A673 (cell line): ENCODE measurements at regions of chr20 and their contacts with region 1.

Region 1: GRCh38 chr20:3101737-3102574 is 17.4 kb upstream of the AVP start:
- DNase-seq: no peak
- H3K4me3 ChIP-seq: no peak overlapping the region
- H3K27ac ChIP-seq: no peak overlapping the region
- H3K4me1 ChIP-seq: no peaks in the 10 kb centered on the region
- H3K27me3 ChIP-seq: no peaks in the 10 kb centered on the region
- CTCF ChIP-seq: no peak

Region 2: DNA sequence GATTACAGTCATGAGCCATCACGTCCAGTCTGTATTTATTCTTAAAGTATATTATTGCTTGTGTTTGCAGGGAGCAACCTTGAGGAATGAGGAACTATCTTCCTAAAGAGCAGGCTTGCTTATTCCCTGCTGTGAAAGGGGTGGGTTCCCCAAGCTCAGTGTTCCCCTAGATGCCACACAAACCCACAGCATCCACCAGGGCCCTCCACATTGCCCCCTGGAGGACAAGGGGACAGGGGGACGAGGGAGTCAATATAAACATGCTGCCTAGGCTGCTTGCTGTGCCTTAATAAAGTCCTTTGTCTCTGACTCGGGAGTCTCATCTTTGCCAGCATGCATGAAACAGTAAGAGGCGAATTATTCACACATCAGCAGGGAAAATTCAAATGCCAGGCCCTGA is 430.0 kb before region 1 on chr20:
- CTCF ChIA-PET with region 1: no interaction called
- POLR2A ChIA-PET with region 1: no interaction called
- intact Hi-C with region 1: no loop called
- DNase-seq: peak; percentile 48
- H3K4me3 ChIP-seq: no peak overlapping the region
- H3K27ac ChIP-seq: no peak overlapping the region
- H3K4me1 ChIP-seq: no peaks in the 10 kb centered on the region
- H3K27me3 ChIP-seq: no peaks in the 10 kb centered on the region
- CTCF ChIP-seq: peak; percentile 46

Region 3: GRCh38 chr20:2713285-2713684 is 388.7 kb before region 1 on chr20:
- CTCF ChIA-PET with region 1: no interaction called
- POLR2A ChIA-PET with region 1: no interaction called
- intact Hi-C with region 1: no loop called
- DNase-seq: peak; percentile 38
- H3K4me3 ChIP-seq: no peak overlapping the region
- H3K27ac ChIP-seq: no peak overlapping the region
- H3K4me1 ChIP-seq: no peaks in the 10 kb centered on the region
- H3K27me3 ChIP-seq: peaks cover 38% of the 10 kb centered on the region
- CTCF ChIP-seq: peak; percentile 59

Region 4: GRCh38 chr20:2984028-2984501 is 117.9 kb before region 1 on chr20:
- CTCF ChIA-PET with region 1: no interaction called
- POLR2A ChIA-PET with region 1: interaction called, 10 read pairs
- intact Hi-C with region 1: no loop called
- DNase-seq: no peak
- H3K4me3 ChIP-seq: no peak overlapping the region
- H3K27ac ChIP-seq: no peak overlapping the region
- H3K4me1 ChIP-seq: peaks cover 10% of the 10 kb centered on the region
- H3K27me3 ChIP-seq: no peaks in the 10 kb centered on the region
- CTCF ChIP-seq: no peak

Region 5: DNA sequence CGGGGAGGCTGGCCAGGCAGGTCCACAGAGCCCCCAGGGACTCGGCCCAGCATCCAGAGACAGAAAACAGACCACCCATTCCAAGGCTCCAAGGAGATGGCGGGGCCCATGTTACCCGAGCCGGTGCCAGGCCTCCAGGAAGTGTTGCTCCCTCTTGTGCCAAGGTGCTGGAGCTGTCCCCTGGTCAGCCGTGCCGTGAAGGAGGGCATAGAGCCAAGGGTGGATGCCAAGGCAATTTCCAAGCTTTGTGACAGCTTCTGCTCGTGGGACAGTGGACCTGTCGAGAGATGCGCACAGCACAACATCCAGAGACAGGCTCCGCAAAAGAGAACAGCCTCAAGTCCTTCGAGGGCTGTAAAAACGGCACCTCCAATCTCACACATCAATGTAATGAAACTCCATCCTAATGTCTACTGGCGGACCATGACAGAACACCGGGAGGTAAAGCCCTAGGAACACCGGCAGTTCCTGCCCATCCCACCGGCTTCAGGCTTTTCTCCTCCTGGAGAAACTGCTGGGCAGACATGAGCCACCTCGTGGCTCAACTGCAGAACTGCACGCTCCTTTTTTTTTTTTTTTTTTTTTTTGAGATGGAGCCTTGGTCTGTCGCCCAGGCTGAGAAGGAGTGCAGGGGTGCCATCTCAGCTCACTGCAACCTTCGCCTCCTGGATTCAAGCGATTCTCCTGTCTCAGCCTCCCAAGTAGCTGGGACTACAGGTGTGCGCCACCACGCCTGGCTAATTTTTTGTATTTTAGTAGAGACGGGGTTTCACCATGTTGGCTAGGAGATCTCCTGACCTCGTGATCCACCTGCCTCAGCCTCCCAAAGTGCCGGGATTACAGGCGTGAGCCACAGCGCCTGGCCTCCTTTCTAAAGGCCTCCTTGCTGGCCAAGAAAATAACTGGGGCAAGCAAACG is 13.5 kb after region 1 on chr20:
- CTCF ChIA-PET with region 1: no interaction called
- POLR2A ChIA-PET with region 1: no interaction called
- intact Hi-C with region 1: no loop called
- DNase-seq: peak; percentile 76
- H3K4me3 ChIP-seq: no peak overlapping the region
- H3K27ac ChIP-seq: no peak overlapping the region
- H3K4me1 ChIP-seq: no peaks in the 10 kb centered on the region
- H3K27me3 ChIP-seq: no peaks in the 10 kb centered on the region
- CTCF ChIP-seq: peak; percentile 78

Region 6: GRCh38 chr20:3323398-3323797 is 221.4 kb after region 1 on chr20:
- CTCF ChIA-PET with region 1: interaction called, 10 read pairs
- POLR2A ChIA-PET with region 1: no interaction called
- intact Hi-C with region 1: no loop called
- DNase-seq: no peak
- H3K4me3 ChIP-seq: no peak overlapping the region
- H3K27ac ChIP-seq: no peak overlapping the region
- H3K4me1 ChIP-seq: no peaks in the 10 kb centered on the region
- H3K27me3 ChIP-seq: no peaks in the 10 kb centered on the region
- CTCF ChIP-seq: no peak